Natural killer cell (primary cell): ENCODE measurements at regions of chr3 and their contacts with region 1.

Region 1: DNA sequence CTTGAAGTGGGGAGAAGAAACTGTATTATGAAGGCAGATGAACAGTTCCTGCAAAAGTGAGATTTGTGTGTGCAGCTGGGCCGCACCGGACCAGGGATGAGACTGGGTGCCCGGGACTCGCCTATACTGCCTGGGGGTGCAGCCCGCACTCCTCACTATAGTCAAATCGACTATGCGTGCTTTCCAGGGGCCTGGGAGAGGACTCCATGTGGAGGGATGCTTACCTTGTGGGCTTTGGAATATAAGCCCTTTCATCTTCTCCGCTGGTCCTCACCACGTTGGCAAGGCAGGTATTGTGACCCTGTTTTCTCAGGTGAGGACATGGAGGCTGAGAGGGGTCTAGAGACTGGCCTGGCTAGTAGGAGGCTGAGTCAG is 33.0 kb upstream of the APOD start:
- DNase-seq: no peak
- ATAC-seq: no peak
- H3K4me3 ChIP-seq: no peak overlapping the region
- H3K4me3 Mint-ChIP-seq: no peak overlapping the region
- H3K27ac ChIP-seq: no peak overlapping the region
- H3K27ac Mint-ChIP-seq: no peak overlapping the region
- H3K4me1 ChIP-seq: peaks cover 8% of the 10 kb centered on the region
- H3K4me1 Mint-ChIP-seq: peaks cover 0 to 5% of the 10 kb centered on the region in 2 donors
- H3K27me3 ChIP-seq: no peaks in the 10 kb centered on the region
- H3K27me3 Mint-ChIP-seq: peaks cover 3 to 16% of the 10 kb centered on the region in 2 donors
- CTCF ChIP-seq: no peak

Region 2: GRCh38 chr3:195727606-195728195 is 111.0 kb after region 1 on chr3:
- intact Hi-C with region 1: loop called (anchors 5 kb)
- DNase-seq: no peak
- ATAC-seq: no peak
- H3K4me3 ChIP-seq: no peak overlapping the region
- H3K4me3 Mint-ChIP-seq: no peak overlapping the region
- H3K27ac ChIP-seq: no peak overlapping the region
- H3K27ac Mint-ChIP-seq: no peak overlapping the region
- H3K4me1 ChIP-seq: no peaks in the 10 kb centered on the region
- H3K4me1 Mint-ChIP-seq: no peaks in the 10 kb centered on the region
- H3K27me3 ChIP-seq: no peaks in the 10 kb centered on the region
- H3K27me3 Mint-ChIP-seq: no peaks in the 10 kb centered on the region
- CTCF ChIP-seq: no peak